BJ (cell line): ENCODE measurements at regions of chr13 and their contacts with region 1.

Region 1: GRCh38 chr13:26872525-26873385 is 112.2 kb upstream of the GPR12 start:
- DNase-seq: no peak
- H3K4me3 ChIP-seq: no peak overlapping the region
- H3K27me3 ChIP-seq: no peaks in the 10 kb centered on the region
- CTCF ChIP-seq: peak; percentile 74

Region 2: DNA sequence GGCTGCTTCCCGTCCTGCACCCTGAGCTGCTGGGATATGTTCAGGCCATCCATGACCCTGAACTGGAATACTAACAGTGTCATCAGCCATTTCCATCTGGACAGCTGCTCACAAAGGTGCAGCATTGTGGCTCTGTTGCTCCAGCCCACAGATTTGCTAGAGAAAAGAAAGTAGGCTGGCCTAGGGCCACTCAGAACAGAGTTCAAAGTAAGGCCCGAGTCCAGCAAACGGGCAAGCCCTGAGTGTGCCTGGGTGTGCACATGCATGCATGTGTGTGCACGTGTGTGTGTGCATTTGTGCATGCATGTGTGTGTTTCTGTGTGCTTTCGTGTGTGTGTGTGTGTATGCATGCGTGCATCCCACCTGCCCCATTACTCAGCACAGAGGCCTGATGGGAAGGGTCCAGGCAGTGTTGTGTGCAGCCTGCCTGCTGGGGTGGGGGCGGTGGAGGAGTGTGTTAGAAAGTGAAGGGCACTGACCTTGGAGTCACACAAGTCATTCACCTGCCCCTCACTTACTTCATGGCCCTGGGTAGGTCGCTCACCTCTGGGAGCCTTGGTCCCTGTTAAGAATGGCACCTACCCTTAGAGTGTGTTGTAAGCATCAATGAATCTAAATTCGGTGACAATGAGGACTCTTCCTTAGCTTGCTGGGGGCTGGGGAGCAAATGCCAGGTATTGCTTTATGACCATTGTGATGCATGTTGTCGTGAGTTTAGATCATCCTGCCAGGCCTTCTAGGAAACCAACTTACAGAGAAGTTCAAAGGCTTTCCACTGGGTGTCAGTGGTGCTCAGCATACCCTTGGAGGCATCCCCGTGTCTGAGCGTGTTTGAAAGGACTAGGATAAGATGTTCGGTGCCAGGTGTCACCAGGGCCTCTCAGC is 165.4 kb before region 1 on chr13:
- CTCF ChIA-PET with region 1: interaction called, 12 read pairs
- POLR2A ChIA-PET with region 1: no interaction called
- DNase-seq: no peak
- H3K4me3 ChIP-seq: no peak overlapping the region
- H3K27me3 ChIP-seq: peaks cover 4% of the 10 kb centered on the region; the same call in 1 of the 2 replicates
- CTCF ChIP-seq: peak; percentile 65

Region 3: GRCh38 chr13:26861941-26862340 is 10.8 kb before region 1 on chr13:
- CTCF ChIA-PET with region 1: interaction called, 10 read pairs
- POLR2A ChIA-PET with region 1: no interaction called
- DNase-seq: no peak
- H3K4me3 ChIP-seq: no peak overlapping the region
- H3K27me3 ChIP-seq: no peaks in the 10 kb centered on the region
- CTCF ChIP-seq: no peak

Region 4: DNA sequence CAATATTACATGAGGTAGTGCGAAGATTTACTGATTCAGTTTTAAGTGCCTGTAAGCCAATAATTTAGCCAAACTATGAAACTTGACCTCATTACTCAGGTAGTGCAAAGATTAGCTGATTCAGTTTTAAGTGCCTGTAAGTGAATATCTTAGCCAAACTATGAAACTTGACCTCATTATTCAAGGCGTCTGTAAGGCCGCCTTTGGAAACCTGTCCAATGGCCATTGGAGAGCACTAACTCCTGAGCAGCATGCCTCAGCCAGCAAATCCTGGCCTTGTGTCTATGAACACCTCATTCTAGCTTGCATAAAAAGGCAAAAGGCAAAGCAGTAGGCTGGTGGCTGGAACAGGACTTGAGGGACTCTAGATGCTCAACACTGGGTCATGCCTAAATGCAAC is 14.8 kb after region 1 on chr13:
- CTCF ChIA-PET with region 1: interaction called, 11 read pairs
- POLR2A ChIA-PET with region 1: no interaction called
- DNase-seq: no peak
- H3K4me3 ChIP-seq: no peak overlapping the region
- H3K27me3 ChIP-seq: peaks cover 4% of the 10 kb centered on the region
- CTCF ChIP-seq: no peak